ENCODE measurements at regions of chr12 and their contacts with region 1.

Region 1: DNA sequence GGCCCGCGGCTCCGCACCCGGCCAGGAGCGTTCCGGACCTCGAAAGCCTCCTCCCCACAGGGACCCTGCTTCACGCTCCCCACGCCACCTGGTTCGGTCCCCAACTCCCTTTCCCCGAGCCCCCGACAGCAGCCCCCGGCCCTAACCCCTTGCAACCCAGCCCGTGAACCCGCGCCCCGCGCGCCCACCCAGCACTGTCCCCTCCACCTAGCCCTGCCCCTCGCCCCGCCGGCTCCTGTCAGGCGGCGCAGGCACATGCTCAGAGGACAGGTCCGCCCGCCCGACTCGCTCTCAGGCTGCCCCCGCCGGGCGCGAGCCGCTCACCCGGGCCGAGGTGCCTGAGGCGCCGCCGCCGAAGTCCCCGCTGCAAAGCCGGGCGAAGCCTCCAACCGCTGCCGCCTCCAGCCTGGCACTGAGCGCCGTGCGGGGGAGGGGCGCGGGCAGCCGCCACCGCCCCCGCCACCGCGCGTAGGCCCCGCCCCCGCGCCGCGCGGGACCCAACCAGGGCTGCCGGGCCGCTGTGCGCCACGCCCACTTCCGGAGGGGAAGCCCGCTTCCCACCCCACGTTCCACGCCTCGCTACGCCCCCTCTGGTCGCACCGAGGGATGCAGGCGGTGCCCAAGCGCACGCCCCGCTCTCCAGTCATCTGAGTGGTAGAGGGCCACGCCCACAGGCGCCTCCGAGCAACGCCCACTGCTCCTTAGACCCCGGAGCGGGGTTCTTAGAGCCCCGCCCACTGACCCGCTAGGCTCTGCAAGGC is at the start of gene CORO1C:
- DNase-seq: peak; percentile 95 to 98
- H3K4me3 ChIP-seq: peak within 1 kb of the TSS; percentile 85
- H3K4me3 Mint-ChIP-seq: peak within 1 kb of the TSS; percentile 95
- H3K27ac Mint-ChIP-seq: peak within 1 kb of the TSS; percentile 99
- H3K4me1 ChIP-seq: peaks cover 45% of the 10 kb centered on the region
- H3K4me1 Mint-ChIP-seq: peaks cover 22% of the 10 kb centered on the region
- H3K27me3 ChIP-seq: no peaks in the 10 kb centered on the region
- H3K27me3 Mint-ChIP-seq: no peaks in the 10 kb centered on the region
- CTCF ChIP-seq: peak; percentile 74 to 78
- total RNA-seq, gene CORO1C: 176 and 195 TPM in 2 replicates

Region 2: GRCh38 chr12:108562348-108563135 is 168.7 kb before region 1 on chr12 and contains the start of gene ISCU:
- CTCF ChIA-PET with region 1: no interaction called
- POLR2A ChIA-PET with region 1: interaction called, 3 read pairs
- intact Hi-C with region 1: loop called (anchors 2 kb)
- DNase-seq: peak; percentile 96 to 99
- H3K4me3 ChIP-seq: peak within 1 kb of the TSS; percentile 96
- H3K4me3 Mint-ChIP-seq: peak within 1 kb of the TSS; percentile 96
- H3K27ac Mint-ChIP-seq: peak within 1 kb of the TSS; percentile 99
- H3K4me1 ChIP-seq: 0 out of 2 replicates have a peak, but pooled peaks cover 3% of the 10 kb centered on the region
- H3K4me1 Mint-ChIP-seq: no peaks in the 10 kb centered on the region
- H3K27me3 ChIP-seq: no peaks in the 10 kb centered on the region
- H3K27me3 Mint-ChIP-seq: no peaks in the 10 kb centered on the region
- CTCF ChIP-seq: no peak
- total RNA-seq, gene ISCU: 70.1 and 86.9 TPM in 2 replicates

Region 3: DNA sequence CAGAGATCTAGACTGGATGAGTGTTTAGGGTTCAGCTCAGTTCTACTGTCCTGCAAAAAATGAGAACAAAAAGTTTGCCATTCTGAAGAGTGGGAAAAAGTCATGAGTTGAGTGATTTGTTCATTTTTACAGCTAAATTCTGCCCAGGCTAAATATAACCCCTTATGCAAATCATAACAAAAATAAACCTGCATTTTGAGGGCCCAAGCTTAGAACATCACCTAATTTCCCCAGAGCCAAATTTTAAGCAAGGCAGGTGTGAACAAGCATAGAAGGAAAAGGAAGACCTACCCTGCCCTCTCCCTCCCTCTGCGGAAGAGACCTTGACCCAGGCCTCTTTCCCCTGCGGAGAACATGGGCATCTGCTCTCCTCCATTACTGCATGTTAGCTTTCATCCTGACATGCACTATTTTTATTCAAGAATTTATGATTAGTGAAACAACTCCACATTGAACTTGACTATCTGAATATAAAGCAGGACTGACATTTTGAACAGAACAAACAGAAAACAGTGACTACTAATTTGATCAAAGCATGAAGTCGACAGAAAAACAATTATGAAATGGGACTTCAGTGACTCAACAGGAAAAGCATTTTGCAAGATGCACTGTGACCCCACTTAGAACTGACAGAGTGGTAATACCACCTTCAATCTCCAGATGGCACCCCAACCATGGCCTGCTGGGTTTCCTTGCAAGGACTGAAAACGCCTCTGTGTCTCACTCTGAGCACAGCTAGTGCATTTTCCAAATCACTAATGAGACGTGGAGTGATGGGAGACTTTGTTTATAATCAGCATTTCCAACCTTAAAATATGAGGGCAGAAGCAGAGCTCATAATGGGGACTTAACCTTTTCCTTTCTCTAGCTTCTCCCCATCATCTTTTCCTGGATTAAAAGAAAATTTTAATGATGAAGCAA is 66.7 kb before region 1 on chr12:
- CTCF ChIA-PET with region 1: interaction called, 6 read pairs
- POLR2A ChIA-PET with region 1: no interaction called
- intact Hi-C with region 1: loop called (anchors 1 kb)
- DNase-seq: peak; percentile 84 to 90
- H3K4me3 ChIP-seq: no peak overlapping the region
- H3K4me3 Mint-ChIP-seq: no peak overlapping the region
- H3K27ac Mint-ChIP-seq: no peak overlapping the region
- H3K4me1 ChIP-seq: peaks cover 6% of the 10 kb centered on the region; the same call in 1 of the 2 replicates
- H3K4me1 Mint-ChIP-seq: peaks cover 11% of the 10 kb centered on the region
- H3K27me3 ChIP-seq: no peaks in the 10 kb centered on the region
- H3K27me3 Mint-ChIP-seq: no peaks in the 10 kb centered on the region
- CTCF ChIP-seq: peak; percentile 86 to 88

Region 4: GRCh38 chr12:108691175-108691997 is 39.9 kb before region 1 on chr12:
- CTCF ChIA-PET with region 1: no interaction called
- POLR2A ChIA-PET with region 1: interaction called, 4 read pairs
- intact Hi-C with region 1: loop called (anchors 1 kb)
- DNase-seq: peak; percentile 89 to 94
- H3K4me3 ChIP-seq: 0 out of 2 replicates have a peak overlapping the region, but pooled peaks have one; percentile 7
- H3K4me3 Mint-ChIP-seq: peak overlapping the region; percentile 60
- H3K27ac Mint-ChIP-seq: peak overlapping the region; percentile 89
- H3K4me1 ChIP-seq: peaks cover 36% of the 10 kb centered on the region
- H3K4me1 Mint-ChIP-seq: peaks cover 41% of the 10 kb centered on the region
- H3K27me3 ChIP-seq: no peaks in the 10 kb centered on the region
- H3K27me3 Mint-ChIP-seq: no peaks in the 10 kb centered on the region
- CTCF ChIP-seq: peak; percentile 31 to 38

Region 5: DNA sequence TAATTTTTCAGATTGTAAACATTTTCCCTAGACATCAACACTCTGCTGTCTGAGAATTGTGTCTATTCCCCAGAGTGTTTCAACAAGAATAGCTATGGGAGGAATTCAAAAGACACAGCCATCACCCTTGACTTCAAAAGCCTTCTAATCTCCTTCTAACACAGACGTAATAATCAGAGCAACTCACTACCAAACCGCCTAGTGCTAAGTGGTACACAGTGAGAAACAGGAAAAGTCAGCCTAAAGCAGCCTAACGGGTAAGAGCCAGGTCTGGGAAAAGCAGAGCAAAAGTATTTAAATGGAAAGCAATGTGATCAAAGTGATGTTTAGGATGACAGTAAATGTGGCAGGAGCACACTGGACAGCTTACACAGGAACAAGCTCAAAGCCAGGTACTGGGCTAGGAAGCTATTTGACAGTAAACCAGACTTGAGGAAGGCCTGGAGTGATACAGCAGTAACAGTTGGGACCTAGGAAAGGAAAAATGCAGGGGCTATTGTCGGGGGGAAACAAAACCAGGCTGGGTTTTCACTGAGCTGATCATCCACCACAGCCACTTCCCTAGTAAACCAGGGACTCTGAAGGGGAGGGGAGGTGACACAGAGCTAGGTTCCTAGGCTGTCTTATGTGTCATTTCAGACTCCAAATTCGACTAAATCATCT is 29.4 kb before region 1 on chr12:
- CTCF ChIA-PET with region 1: no interaction called
- POLR2A ChIA-PET with region 1: interaction called, 11 read pairs
- intact Hi-C with region 1: no loop called
- DNase-seq: peak; percentile 43 to 65
- H3K4me3 ChIP-seq: no peak overlapping the region
- H3K4me3 Mint-ChIP-seq: peak overlapping the region; percentile 1
- H3K27ac Mint-ChIP-seq: peak overlapping the region; percentile 74
- H3K4me1 ChIP-seq: peaks cover 26% of the 10 kb centered on the region
- H3K4me1 Mint-ChIP-seq: peaks cover 41% of the 10 kb centered on the region
- H3K27me3 ChIP-seq: no peaks in the 10 kb centered on the region
- H3K27me3 Mint-ChIP-seq: no peaks in the 10 kb centered on the region
- CTCF ChIP-seq: no peak

Region 6: DNA sequence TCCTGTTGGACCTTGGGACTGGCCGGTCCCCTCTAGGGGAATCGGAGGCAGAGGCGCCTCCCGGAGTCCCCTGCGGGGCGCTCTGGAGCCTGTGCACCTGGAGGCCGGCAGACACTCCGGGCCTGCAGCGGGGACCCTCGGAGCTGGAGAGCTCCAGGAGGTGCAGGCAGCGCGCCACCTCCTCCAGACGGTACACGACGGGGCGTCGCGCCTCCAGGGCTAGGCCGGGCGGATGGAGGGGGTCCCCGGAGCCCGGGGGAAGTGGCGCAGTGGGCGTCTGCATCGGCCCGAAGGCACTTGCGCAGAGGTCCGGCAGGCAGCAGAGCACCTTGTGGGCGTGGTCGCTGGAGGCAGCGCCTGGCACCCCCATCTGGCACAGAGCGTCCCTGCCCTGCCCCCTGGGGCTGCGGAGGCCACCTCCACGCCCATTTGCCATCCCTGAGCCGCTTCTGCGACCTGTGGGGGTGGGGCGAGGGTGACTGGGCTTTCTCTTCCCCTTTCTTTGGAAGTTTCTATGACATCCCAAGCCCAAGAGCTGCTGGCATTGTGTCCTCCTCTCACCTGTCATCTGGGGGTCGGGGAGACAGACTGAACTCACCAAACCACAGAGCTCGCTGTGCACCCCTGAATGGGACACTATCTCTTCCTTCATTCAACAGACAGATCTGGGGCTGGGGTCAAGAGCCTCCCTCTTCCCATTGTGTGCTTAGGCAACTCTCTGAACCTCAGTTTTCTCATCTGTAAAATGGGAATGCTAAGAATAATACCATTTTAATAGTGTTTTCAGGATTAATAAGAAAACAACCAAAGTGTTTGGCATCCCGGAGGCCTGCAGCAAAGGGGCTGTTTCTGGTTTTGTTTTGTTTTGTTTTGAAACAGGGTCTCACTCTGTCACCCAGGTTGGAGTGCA is 37.6 kb after region 1 on chr12:
- CTCF ChIA-PET with region 1: interaction called, 6 read pairs
- POLR2A ChIA-PET with region 1: no interaction called
- intact Hi-C with region 1: loop called (anchors 5 kb)
- DNase-seq: peak in 1 of 2 experiments; percentile 37
- H3K4me3 ChIP-seq: no peak overlapping the region; the same call in 1 of the 2 replicates
- H3K4me3 Mint-ChIP-seq: peak overlapping the region; percentile 23
- H3K27ac Mint-ChIP-seq: no peak overlapping the region
- H3K4me1 ChIP-seq: peaks cover 18% of the 10 kb centered on the region
- H3K4me1 Mint-ChIP-seq: peaks cover 7% of the 10 kb centered on the region
- H3K27me3 ChIP-seq: no peaks in the 10 kb centered on the region
- H3K27me3 Mint-ChIP-seq: no peaks in the 10 kb centered on the region
- CTCF ChIP-seq: no peak

Region 7: DNA sequence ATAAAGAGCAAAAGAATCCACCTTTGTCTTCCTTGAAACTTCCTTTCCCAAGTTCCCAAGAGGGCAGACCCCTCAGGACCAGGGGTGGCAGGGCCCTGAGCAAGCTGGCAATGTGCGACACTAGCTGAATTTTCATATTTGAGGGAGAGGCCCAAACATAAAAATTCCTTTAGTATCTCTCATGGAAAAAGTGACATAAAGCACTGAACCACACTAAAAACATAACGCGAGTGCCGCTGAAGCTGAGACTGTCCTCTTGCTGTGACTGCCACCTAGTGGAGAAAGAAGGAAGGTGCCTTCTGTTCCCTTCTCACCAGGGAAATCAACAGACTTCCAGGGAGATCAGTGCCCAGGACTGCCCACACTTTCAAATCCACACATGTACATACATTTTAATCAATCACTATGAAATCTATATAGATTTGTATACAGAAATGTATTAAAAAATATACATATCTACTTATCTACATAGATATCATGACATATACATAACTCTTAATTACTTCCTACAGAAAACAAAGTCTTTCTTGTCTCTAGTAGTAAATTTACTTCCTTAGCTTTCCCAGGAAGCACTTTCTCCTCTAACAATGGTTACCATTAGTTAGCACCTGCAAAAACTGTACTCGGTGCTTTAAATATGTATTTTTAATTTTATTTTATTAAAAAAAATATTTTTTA is 72.3 kb after region 1 on chr12:
- CTCF ChIA-PET with region 1: no interaction called
- POLR2A ChIA-PET with region 1: no interaction called
- intact Hi-C with region 1: loop called (anchors 1 kb)
- DNase-seq: peak; percentile 70 to 84
- H3K4me3 ChIP-seq: no peak overlapping the region
- H3K4me3 Mint-ChIP-seq: no peak overlapping the region
- H3K27ac Mint-ChIP-seq: peak overlapping the region; percentile 35
- H3K4me1 ChIP-seq: peaks cover 11% of the 10 kb centered on the region; the same call in 1 of the 2 replicates
- H3K4me1 Mint-ChIP-seq: no peaks in the 10 kb centered on the region
- H3K27me3 ChIP-seq: no peaks in the 10 kb centered on the region
- H3K27me3 Mint-ChIP-seq: no peaks in the 10 kb centered on the region
- CTCF ChIP-seq: peak; percentile 89 to 90